ENCODE measurements at regions of chr4 and their contacts with region 1.

Region 1: GRCh38 chr4:89226665-89227574 is 80.7 kb downstream of the GPRIN3 start:
- DNase-seq: peak; percentile 86
- ATAC-seq: peak; percentile 94
- H3K4me3 Mint-ChIP-seq: no peak overlapping the region
- H3K27ac Mint-ChIP-seq: no peak overlapping the region
- H3K4me1 Mint-ChIP-seq: peaks cover 15% of the 10 kb centered on the region
- H3K27me3 Mint-ChIP-seq: no peaks in the 10 kb centered on the region

Region 2: GRCh38 chr4:89204624-89205023 is 22.3 kb before region 1 on chr4:
- CTCF ChIA-PET with region 1: no interaction called
- DNase-seq: no peak
- ATAC-seq: no peak
- H3K4me3 Mint-ChIP-seq: no peak overlapping the region
- H3K27ac Mint-ChIP-seq: no peak overlapping the region
- H3K4me1 Mint-ChIP-seq: no peaks in the 10 kb centered on the region
- H3K27me3 Mint-ChIP-seq: peaks cover 11% of the 10 kb centered on the region

Region 3: GRCh38 chr4:89419067-89419695 is 192.3 kb after region 1 on chr4:
- CTCF ChIA-PET with region 1: no interaction called
- DNase-seq: no peak
- ATAC-seq: no peak
- H3K4me3 Mint-ChIP-seq: no peak overlapping the region
- H3K27ac Mint-ChIP-seq: no peak overlapping the region
- H3K4me1 Mint-ChIP-seq: no peaks in the 10 kb centered on the region
- H3K27me3 Mint-ChIP-seq: no peaks in the 10 kb centered on the region

Region 4: DNA sequence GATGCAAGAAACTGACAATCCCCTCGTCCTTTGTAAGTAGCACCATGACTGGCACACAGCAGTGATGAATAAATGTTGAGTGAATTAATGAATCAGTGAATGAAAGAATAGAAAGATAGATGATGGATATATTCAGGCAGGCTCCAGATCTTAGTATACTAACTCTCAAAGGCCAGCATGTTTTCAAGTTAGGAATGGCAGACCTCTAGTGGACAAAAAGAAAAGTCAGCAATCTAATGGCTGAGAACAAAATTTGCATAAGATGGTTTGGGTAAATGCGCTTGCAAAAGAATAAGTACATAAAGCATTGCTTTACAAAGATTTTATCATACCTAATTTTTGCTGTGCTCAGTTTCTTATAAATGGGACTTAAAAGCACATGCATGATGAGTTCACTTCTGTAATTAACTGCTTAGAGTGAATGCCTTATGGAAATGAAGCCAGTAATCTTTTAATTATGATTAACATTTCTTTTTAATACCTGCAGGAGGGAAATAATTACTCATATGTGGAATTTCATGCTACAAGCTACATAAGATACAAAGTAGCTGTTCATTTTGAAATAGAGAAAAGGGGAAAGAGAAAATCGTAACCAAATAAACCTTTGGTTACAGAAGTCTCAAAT is 207.6 kb after region 1 on chr4:
- CTCF ChIA-PET with region 1: interaction called, 55 read pairs
- DNase-seq: no peak
- ATAC-seq: peak; percentile 77
- H3K4me3 Mint-ChIP-seq: no peak overlapping the region
- H3K27ac Mint-ChIP-seq: no peak overlapping the region
- H3K4me1 Mint-ChIP-seq: peaks cover 12% of the 10 kb centered on the region
- H3K27me3 Mint-ChIP-seq: peaks cover 3% of the 10 kb centered on the region

Measured in activated CD8-positive, alpha-beta memory T cell treated with anti-CD3 and anti-CD28 coated beads, Interleukin-2, amount 10 ng/mL, durations not matched to agents 7 days and 5 days (primary cell).